GM23248 (cell line): ENCODE measurements at regions of chr6 and their contacts with region 1.

Region 1: GRCh38 chr6:121849477-121849876 is 414.0 kb downstream of the GJA1 start:
- DNase-seq: peak; percentile 72
- H3K4me3 ChIP-seq: no peak overlapping the region
- H3K27ac ChIP-seq: no peak overlapping the region
- H3K4me1 ChIP-seq: peaks cover 7% of the 10 kb centered on the region; the same call in 1 of the 2 replicates
- H3K27me3 ChIP-seq: no peaks in the 10 kb centered on the region

Region 2: DNA sequence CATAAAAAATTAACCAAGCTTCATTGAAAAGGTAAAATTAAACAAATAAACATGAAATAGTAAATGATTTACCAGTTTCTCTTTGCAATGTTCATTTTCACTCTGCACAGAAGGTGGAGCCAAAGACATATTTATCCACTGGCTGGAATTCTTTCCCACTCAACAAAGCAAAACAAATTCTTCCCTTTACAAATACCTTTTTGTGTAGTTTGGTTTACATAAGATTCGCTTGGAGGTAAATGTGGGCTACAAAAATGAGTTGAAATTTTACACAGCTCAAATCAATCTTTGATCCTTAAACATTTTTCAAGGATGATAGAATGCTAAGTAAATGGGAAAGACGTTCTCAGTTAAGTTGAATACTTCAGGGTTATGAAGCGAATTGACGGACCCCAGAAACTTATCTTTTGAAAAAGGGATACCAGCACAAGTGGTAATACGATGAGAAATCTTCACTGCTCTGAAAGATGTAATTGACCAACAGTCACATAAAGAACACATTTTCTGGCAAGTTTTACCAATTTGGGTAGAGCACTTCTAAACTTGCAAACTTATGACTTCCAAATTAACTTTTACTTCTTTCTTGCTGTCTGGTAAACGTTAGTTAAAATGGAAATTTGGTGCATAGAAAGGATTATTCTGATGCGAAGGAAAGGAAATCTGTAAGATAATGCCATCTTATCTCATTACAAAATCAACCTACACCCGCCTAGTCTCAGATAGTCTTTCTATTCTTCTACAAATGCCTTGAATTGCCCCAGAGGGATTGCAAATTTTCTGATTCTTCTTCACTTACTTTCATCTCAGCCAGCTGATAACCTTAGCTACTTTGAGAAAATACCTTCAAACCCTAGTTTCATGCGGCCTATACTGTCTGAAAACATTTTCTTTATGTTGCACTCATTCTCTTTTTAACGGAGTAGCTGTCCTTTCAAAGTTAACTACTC is 418.7 kb before region 1 on chr6:
- in situ Hi-C with region 1: loop called (anchors 10 kb)
- DNase-seq: peak; percentile 72
- H3K4me3 ChIP-seq: no peak overlapping the region
- H3K27ac ChIP-seq: no peak overlapping the region
- H3K4me1 ChIP-seq: peaks cover 5% of the 10 kb centered on the region; the same call in 1 of the 2 replicates
- H3K27me3 ChIP-seq: no peaks in the 10 kb centered on the region

Region 3: GRCh38 chr6:122020588-122021264 is 171.2 kb after region 1 on chr6:
- in situ Hi-C with region 1: loop called (anchors 10 kb)
- DNase-seq: no peak
- H3K4me3 ChIP-seq: no peak overlapping the region
- H3K27ac ChIP-seq: no peak overlapping the region
- H3K4me1 ChIP-seq: peaks cover under 1% of the 10 kb centered on the region
- H3K27me3 ChIP-seq: no peaks in the 10 kb centered on the region

Region 4: GRCh38 chr6:122184401-122184827 is 334.9 kb after region 1 on chr6:
- in situ Hi-C with region 1: loop called (anchors 10 kb)
- DNase-seq: peak; percentile 67
- H3K4me3 ChIP-seq: peak overlapping the region; percentile 52
- H3K27ac ChIP-seq: no peak overlapping the region
- H3K4me1 ChIP-seq: no peaks in the 10 kb centered on the region
- H3K27me3 ChIP-seq: no peaks in the 10 kb centered on the region